ENCODE measurements at regions of chr21 and their contacts with region 1.

Region 1: GRCh38 chr21:14864211-14865021 is 200.4 kb downstream of the NRIP1 start:
- DNase-seq: peak; percentile 80 to 84 (median 83)
- H3K4me3 ChIP-seq: peak overlapping the region in 1 of 3 donors; percentile 2
- H3K27ac ChIP-seq: peak overlapping the region; percentile 21 to 33
- H3K4me1 ChIP-seq: peaks cover 0 to 7% (median 7%) of the 10 kb centered on the region in 3 donors
- H3K27me3 ChIP-seq: no peaks in the 10 kb centered on the region
- CTCF ChIP-seq: peak; percentile 74

Region 2: GRCh38 chr21:15084668-15085067 is 220.3 kb after region 1 on chr21:
- intact Hi-C with region 1: no loop called
- DNase-seq: no peak
- H3K4me3 ChIP-seq: no peak overlapping the region
- H3K27ac ChIP-seq: no peak overlapping the region
- H3K4me1 ChIP-seq: no peaks in the 10 kb centered on the region
- H3K27me3 ChIP-seq: no peaks in the 10 kb centered on the region
- CTCF ChIP-seq: no peak

Region 3: GRCh38 chr21:15483138-15483780 is 618.8 kb after region 1 on chr21:
- intact Hi-C with region 1: loop called (anchors 5 kb)
- DNase-seq: peak; percentile 92 to 97 (median 93)
- H3K4me3 ChIP-seq: no peak overlapping the region
- H3K27ac ChIP-seq: no peak overlapping the region
- H3K4me1 ChIP-seq: no peaks in the 10 kb centered on the region
- H3K27me3 ChIP-seq: no peaks in the 10 kb centered on the region
- CTCF ChIP-seq: peak; percentile 92